ENCODE measurements at regions of chr15 and their contacts with region 1.

Region 1: DNA sequence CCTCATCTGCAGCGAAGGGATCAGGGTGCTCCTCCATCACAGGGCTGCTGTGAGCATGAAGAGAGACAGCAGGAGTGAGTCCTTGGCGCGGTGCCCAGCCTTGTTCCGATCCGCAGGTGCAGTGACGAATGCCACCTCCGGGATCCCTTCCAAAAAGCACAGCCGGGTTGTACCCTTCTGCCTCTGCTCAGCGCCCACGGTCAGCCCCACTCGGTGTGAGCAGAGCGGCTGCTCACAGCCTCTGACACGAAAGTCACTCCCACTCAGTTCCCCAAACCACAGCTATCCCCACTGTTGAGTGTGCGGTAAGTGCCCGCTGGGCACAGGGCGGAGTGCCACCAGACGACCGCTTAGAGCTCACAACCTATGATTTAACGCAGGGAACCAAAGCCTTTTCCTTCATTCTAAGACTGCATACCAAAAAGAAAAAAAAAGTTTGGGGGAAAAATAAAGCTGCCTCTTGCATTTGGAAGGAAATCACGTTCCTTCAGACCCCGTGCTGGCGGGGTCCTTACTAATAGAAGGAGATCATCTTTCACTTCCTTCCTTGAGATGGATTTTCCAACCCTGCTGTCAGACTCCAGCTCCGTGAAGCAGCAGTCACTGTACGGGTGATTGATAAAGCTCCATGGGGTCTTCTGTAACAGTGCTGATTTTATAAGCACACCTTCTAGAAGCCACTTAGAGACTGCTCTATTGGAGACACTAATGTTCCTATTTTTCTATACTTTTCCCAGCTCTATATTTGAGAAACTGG is 34.7 kb upstream of the TUBGCP5 start:
- DNase-seq: no peak
- H3K4me3 ChIP-seq: no peak overlapping the region
- H3K4me3 Mint-ChIP-seq: no peak overlapping the region
- H3K27ac Mint-ChIP-seq: peak overlapping the region; percentile 15
- H3K4me1 ChIP-seq: peaks cover 7% of the 10 kb centered on the region
- H3K4me1 Mint-ChIP-seq: peaks cover 16% of the 10 kb centered on the region
- H3K27me3 ChIP-seq: no peaks in the 10 kb centered on the region; the same call in 1 of the 2 replicates
- H3K27me3 Mint-ChIP-seq: no peaks in the 10 kb centered on the region
- CTCF ChIP-seq: no peak

Region 2: DNA sequence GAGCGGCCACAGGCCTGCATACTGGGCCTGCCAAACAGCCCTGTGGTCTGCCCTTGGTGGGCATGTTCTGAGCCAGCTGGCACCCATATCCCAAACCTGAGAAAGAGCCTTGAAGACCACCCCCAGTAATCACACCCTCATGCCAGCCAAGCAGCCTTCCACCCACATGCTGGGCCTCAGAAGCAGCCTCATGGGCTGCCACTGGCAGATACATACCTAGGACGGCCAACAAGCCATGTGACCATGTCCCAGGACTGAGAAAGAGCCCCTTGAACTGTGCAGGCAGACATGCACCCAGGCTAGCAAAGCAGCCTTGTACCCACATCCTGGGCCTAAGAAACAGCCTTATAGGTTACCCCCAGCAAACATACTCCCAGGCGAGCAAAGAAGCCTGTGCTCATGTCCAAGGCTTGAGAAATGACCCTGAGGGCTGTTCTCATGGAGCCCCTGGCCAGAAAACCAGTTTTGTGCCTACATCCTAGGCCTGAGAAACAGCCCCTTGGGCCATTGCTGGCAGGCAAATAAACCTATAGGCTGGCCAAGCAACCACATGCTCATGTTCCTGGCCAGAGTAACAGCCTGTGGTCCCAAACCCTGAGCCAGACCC is 59.6 kb before region 1 on chr15:
- CTCF ChIA-PET with region 1: no interaction called
- POLR2A ChIA-PET with region 1: no interaction called
- intact Hi-C with region 1: no loop called
- DNase-seq: no peak
- H3K4me3 ChIP-seq: no peak overlapping the region
- H3K4me3 Mint-ChIP-seq: no peak overlapping the region
- H3K27ac Mint-ChIP-seq: no peak overlapping the region
- H3K4me1 ChIP-seq: no peaks in the 10 kb centered on the region
- H3K4me1 Mint-ChIP-seq: no peaks in the 10 kb centered on the region
- H3K27me3 ChIP-seq: no peaks in the 10 kb centered on the region
- H3K27me3 Mint-ChIP-seq: no peaks in the 10 kb centered on the region
- CTCF ChIP-seq: no peak

Region 3: GRCh38 chr15:23039151-23039916 is 34.7 kb before region 1 on chr15 and contains the start of gene TUBGCP5:
- CTCF ChIA-PET with region 1: interaction called, 4 read pairs
- POLR2A ChIA-PET with region 1: interaction called, 6 read pairs
- intact Hi-C with region 1: loop called (anchors 2 kb)
- DNase-seq: peak; percentile 99 to 100
- H3K4me3 ChIP-seq: peak within 1 kb of the TSS; percentile 79
- H3K4me3 Mint-ChIP-seq: peak within 1 kb of the TSS; percentile 99
- H3K27ac Mint-ChIP-seq: peak within 1 kb of the TSS; percentile 99
- H3K4me1 ChIP-seq: peaks cover 11% of the 10 kb centered on the region
- H3K4me1 Mint-ChIP-seq: peaks cover 17% of the 10 kb centered on the region
- H3K27me3 ChIP-seq: no peaks in the 10 kb centered on the region
- H3K27me3 Mint-ChIP-seq: no peaks in the 10 kb centered on the region
- CTCF ChIP-seq: peak; percentile 27 to 44
- total RNA-seq, gene TUBGCP5: 48.3 and 53.1 TPM in 2 replicates